ENCODE measurements at regions of chr6 and their contacts with region 1.

Region 1: GRCh38 chr6:128586095-128586494 is 65.7 kb upstream of the PTPRK start:
- DNase-seq: no peak
- H3K4me3 ChIP-seq: no peak overlapping the region
- H3K27ac ChIP-seq: no peak overlapping the region
- H3K4me1 ChIP-seq: no peaks in the 10 kb centered on the region
- H3K27me3 ChIP-seq: no peaks in the 10 kb centered on the region
- CTCF ChIP-seq: no peak
- POLR2A ChIP-seq: no peak

Region 2: GRCh38 chr6:128532827-128533226 is 53.3 kb before region 1 on chr6:
- CTCF ChIA-PET with region 1: no interaction called
- POLR2A ChIA-PET with region 1: no interaction called
- dilution Hi-C with region 1: no loop called
- intact Hi-C with region 1: no loop called
- DNase-seq: no peak
- H3K4me3 ChIP-seq: no peak overlapping the region
- H3K27ac ChIP-seq: no peak overlapping the region
- H3K4me1 ChIP-seq: no peaks in the 10 kb centered on the region
- H3K27me3 ChIP-seq: no peaks in the 10 kb centered on the region
- CTCF ChIP-seq: no peak
- POLR2A ChIP-seq: no peak

Region 3: DNA sequence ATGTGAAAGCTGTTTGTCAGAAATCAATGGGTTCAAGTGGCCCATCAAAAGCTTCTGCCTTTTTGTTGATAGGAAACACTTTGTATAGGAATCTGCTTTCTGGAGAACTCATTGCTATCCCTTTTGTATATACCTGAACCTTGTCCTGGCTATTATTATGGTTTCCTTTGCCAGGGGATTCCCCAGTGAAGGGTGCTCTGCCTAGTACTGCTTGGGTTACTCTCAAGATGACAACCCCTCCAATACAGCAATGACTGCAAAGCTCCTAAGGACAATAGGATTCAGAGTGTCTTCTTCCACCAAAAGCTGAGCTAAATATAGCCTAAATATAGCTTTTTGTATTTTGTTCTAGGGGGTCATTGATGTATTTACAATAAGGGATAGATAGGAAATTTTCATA is 11.7 kb before region 1 on chr6:
- CTCF ChIA-PET with region 1: interaction called, 3 read pairs
- POLR2A ChIA-PET with region 1: no interaction called
- dilution Hi-C with region 1: no loop called
- intact Hi-C with region 1: loop called (anchors 1 kb)
- DNase-seq: no peak
- H3K4me3 ChIP-seq: no peak overlapping the region
- H3K27ac ChIP-seq: no peak overlapping the region
- H3K4me1 ChIP-seq: peaks cover 5% of the 10 kb centered on the region
- H3K27me3 ChIP-seq: no peaks in the 10 kb centered on the region
- CTCF ChIP-seq: no peak
- POLR2A ChIP-seq: no peak

Measured in endothelial cell of umbilical vein (primary cell).